ENCODE measurements at regions of chr14 and their contacts with region 1.

Region 1: GRCh38 chr14:35416108-35416750 is 11.7 kb upstream of the NFKBIA start:
- DNase-seq: no peak
- H3K4me3 Mint-ChIP-seq: no peak overlapping the region
- H3K27ac Mint-ChIP-seq: peak overlapping the region; percentile 9
- H3K4me1 Mint-ChIP-seq: peaks cover 21% of the 10 kb centered on the region
- H3K27me3 Mint-ChIP-seq: no peaks in the 10 kb centered on the region
- CTCF ChIP-seq: no peak

Region 2: DNA sequence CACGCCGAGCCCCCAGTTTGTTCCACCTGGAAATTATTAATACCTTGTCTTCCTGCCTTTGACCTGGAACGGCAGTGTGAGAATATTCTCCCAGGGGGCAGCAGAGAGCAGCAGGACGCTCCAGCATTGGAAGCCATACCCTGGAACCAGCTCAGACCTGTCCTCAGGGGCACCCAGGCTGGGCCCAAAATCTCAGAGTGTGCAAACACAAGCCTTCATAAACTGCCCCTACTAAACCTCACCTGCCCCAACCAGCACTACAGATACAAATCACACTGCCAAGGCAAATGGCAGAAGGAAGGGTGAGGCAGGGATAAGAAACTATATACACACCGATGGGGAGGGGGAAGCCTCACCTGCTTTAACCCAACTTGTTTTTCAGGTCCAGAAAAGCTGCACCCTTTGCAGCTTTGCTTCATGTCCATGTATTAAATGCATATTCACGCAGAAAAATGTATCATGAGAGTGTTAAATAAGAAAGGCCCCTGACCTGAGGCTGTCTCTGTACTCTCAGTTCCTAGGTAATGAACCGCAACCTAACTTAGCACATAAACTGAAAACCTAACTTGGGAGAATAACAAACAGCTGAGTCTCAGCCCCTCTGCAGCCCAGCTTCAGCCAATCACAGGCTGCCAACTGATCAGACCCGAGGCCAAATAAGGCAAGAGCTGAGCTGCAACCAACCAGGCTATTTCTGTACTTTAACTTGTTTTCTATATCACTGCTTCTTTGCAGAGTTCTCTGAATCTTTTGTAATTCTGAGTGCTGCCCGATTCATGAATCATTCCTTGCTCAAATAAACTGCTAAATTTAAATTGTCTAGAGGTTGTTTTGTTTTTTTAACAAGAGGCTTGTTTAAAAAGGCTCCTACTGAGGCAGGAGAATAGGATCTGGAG is 1084.3 kb before region 1 on chr14:
- CTCF ChIA-PET with region 1: interaction called, 4 read pairs
- POLR2A ChIA-PET with region 1: no interaction called
- intact Hi-C with region 1: loop called (anchors 5 kb)
- DNase-seq: peak; percentile 82
- H3K4me3 Mint-ChIP-seq: peak overlapping the region; percentile 11
- H3K27ac Mint-ChIP-seq: peak overlapping the region; percentile 70
- H3K4me1 Mint-ChIP-seq: peaks cover 20% of the 10 kb centered on the region
- H3K27me3 Mint-ChIP-seq: no peaks in the 10 kb centered on the region
- CTCF ChIP-seq: peak; percentile 78

Region 3: GRCh38 chr14:34875031-34875922 is 541.0 kb before region 1 on chr14 and contains the start of gene BAZ1A:
- CTCF ChIA-PET with region 1: no interaction called
- POLR2A ChIA-PET with region 1: no interaction called
- intact Hi-C with region 1: loop called (anchors 10 kb)
- DNase-seq: peak; percentile 94
- H3K4me3 Mint-ChIP-seq: peak within 1 kb of the TSS; percentile 93
- H3K27ac Mint-ChIP-seq: peak within 1 kb of the TSS; percentile 99
- H3K4me1 Mint-ChIP-seq: peaks cover 8% of the 10 kb centered on the region
- H3K27me3 Mint-ChIP-seq: no peaks in the 10 kb centered on the region
- CTCF ChIP-seq: no peak
- total RNA-seq, gene BAZ1A: 33.3 and 44.6 TPM in 2 replicates

Region 4: GRCh38 chr14:35046048-35046741 is 370.0 kb before region 1 on chr14 and contains the start of gene FAM177A1:
- CTCF ChIA-PET with region 1: interaction called, 11 read pairs
- POLR2A ChIA-PET with region 1: interaction called, 6 read pairs
- intact Hi-C with region 1: loop called (anchors 2 kb)
- DNase-seq: peak; percentile 97
- H3K4me3 Mint-ChIP-seq: peak within 1 kb of the TSS; percentile 94
- H3K27ac Mint-ChIP-seq: peak within 1 kb of the TSS; percentile 98
- H3K4me1 Mint-ChIP-seq: peaks cover 24% of the 10 kb centered on the region
- H3K27me3 Mint-ChIP-seq: no peaks in the 10 kb centered on the region
- CTCF ChIP-seq: no peak
- total RNA-seq, gene FAM177A1: 73.9 and 74.6 TPM in 2 replicates

Region 5: DNA sequence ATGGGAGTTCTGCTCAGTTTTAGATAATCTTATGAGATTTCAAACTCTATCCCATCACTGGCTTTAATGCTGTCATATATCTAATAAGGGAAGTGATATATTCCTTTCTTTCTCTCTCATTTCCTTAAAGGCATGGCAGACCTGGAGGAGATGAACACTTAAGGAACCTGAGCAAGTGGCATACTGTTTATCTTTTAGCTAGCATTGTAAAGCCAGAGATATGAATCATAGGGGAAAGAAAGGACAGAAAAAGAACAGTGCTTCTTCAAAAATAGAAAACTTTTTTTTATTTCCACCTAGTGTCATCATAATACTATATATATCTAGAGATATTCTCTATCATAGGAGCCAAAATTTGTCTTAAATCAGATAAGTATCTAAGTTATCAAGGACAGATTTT is 192.3 kb before region 1 on chr14:
- CTCF ChIA-PET with region 1: interaction called, 35 read pairs
- POLR2A ChIA-PET with region 1: no interaction called
- intact Hi-C with region 1: no loop called
- DNase-seq: no peak
- H3K4me3 Mint-ChIP-seq: no peak overlapping the region
- H3K27ac Mint-ChIP-seq: no peak overlapping the region
- H3K4me1 Mint-ChIP-seq: peaks cover 8% of the 10 kb centered on the region
- H3K27me3 Mint-ChIP-seq: no peaks in the 10 kb centered on the region
- CTCF ChIP-seq: no peak

Region 6: DNA sequence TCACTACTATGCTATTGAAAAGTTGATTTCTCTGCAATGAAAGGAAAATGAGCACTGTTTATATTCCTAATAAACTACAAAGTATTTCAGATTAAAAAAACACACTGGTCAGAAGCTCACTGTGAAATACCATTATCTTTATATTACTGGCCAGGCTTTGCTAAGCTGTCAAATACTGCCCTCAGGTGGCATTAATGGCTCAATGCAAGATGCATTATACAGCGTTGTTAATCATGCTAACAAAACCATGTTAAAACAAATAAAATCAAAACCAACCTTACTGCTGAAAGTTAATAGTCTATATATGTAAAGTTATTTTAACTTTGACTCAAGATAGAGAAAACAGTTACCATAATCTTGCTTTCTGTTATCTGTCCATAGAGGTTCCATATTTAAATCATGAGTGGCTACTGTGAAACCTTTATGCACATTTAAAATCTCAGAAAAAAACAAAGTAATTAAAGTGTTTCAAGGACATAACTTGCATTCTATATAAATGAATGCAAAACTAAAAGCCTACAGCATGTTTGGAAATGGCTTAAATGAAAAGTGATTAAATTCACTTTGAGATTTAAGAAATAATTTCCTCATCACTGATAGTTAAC is 271.2 kb after region 1 on chr14:
- CTCF ChIA-PET with region 1: no interaction called
- POLR2A ChIA-PET with region 1: no interaction called
- intact Hi-C with region 1: loop called (anchors 1 kb)
- DNase-seq: peak; percentile 63
- H3K4me3 Mint-ChIP-seq: no peak overlapping the region
- H3K27ac Mint-ChIP-seq: no peak overlapping the region
- H3K4me1 Mint-ChIP-seq: no peaks in the 10 kb centered on the region
- H3K27me3 Mint-ChIP-seq: no peaks in the 10 kb centered on the region
- CTCF ChIP-seq: peak; percentile 86

Measured in MCF 10A (cell line).